ENCODE measurements at regions of chrX and their contacts with region 1.

Region 1: DNA sequence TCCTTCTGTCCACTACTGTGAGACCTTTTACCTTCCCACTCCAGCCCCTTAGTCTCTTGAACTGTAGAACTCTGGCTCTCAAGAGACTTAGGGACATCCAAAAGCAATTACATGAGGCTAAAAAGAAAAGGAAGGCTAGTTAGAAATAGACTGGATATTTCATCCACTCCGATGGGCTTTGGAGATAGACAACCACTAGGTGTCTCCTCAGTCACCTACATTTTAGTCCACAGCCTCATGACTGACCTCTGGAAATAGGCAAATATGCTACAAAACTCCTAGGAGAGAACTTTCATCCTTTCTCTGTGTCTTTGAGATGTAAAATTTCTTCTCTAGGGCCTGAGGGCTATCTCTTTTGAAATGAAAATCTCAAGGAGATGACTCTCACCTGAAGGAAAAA is 45.1 kb upstream of the LAMP2 start:
- DNase-seq: peak; percentile 53

Region 2: DNA sequence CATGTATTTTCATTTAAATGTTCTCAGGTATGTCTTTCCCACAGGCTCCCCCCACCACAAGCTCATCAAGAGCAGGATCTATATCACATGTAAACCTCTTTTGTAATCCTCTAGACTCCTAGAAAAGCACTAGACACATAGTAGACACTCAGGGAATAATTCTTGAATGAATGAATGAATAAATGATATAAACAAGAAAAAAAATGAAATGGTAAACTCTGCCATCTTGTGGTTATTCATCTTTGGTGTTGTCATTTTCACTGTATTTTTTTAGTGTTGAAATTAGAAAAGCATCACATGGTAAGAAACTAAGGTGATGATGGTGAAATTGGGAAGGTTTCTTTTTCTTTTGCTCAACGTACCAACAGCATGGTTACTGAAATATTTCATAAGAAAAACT is 149.8 kb after region 1 on chrX:
- in situ Hi-C with region 1: loop called (anchors 10 kb)
- DNase-seq: peak; percentile 78

Region 3: DNA sequence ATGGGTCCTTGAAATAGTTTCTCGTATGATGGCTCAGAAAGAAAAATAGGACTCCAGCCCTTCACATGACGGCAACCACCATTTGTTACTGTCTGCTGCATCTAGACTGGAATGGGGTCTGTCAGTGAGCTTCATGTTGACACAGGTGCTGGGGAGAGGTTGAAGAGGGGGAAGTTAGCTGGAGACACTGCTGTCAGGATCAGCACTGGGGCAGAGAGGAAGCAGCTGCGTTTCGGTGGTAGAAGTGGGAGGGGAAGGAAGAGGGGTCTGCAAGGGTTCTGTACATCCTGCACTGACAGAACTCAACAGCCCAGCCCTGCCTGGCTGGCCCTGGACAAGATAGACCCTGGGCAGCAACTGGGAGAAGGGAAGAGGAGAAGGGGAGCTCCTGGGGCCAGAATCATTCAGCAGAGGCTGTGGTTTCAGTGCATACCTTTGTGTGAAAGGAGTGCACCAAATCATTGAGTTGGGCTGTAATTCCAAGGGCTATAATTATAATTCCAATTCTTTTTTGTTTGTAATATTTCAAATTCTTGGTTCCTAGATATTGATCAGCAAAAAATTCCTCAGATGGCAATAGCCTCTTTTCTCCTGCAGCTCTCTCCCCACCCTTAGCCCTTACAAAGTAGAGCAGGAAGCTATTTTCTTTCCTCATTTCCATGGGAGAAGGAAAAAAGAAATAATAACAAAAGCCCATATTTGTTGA is 235.1 kb after region 1 on chrX:
- in situ Hi-C with region 1: no loop called
- DNase-seq: peak; percentile 95

Measured in KBM-7 (cell line).